K562 (cell line): ENCODE measurements at regions of chrX and their contacts with region 1.

Region 1: DNA sequence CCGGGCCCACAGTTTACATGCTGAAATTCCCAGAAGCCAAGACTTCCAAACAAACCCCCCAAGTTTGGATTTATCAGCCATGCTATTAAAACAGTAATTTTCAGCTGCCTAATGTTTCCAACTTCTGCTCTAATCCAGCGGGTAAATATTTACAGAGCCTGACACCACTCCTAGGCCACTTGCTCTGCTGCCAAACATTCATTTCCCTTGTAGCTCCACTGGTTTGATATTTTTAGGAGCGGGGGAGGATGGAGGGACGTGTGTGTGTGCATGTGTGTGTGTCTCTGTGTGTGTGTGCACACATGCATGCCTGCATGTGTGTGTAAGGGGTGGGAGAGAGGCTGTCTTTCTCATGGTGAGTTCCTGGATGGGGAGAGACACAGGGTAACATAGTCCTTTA is 115.7 kb upstream of the PJA1 start:
- DNase-seq: no peak
- ATAC-seq: no peak
- H3K4me3 ChIP-seq: no peak overlapping the region
- H3K27ac ChIP-seq: no peak overlapping the region
- H3K4me1 ChIP-seq: peaks cover 0 to 3% of the 10 kb centered on the region in 2 experiments; a peak in 2 of 5 replicates
- H3K27me3 ChIP-seq: peaks cover 0 to 18% of the 10 kb centered on the region in 2 experiments; a peak in 2 of 5 replicates
- CTCF ChIP-seq: no peak
- EP300 ChIP-seq: no peak
- POLR2A ChIP-seq: no peak
- RAD21 ChIP-seq: no peak

Region 2: GRCh38 chrX:68822641-68823410 is 458.1 kb before region 1 on chrX:
- CTCF ChIA-PET with region 1: interaction called, 3 read pairs
- POLR2A ChIA-PET with region 1: no interaction called
- in situ Hi-C with region 1: loop called (anchors 5 kb)
- intact Hi-C with region 1: loop called (anchors 2 kb)
- DNase-seq: peak; percentile 32 to 46 (median 41)
- ATAC-seq: peak; percentile 96
- H3K4me3 ChIP-seq: no peak overlapping the region
- H3K27ac ChIP-seq: no peak overlapping the region
- H3K4me1 ChIP-seq: no peaks in the 10 kb centered on the region; a peak in 1 of 5 replicates
- H3K27me3 ChIP-seq: no peaks in the 10 kb centered on the region
- CTCF ChIP-seq: peak; percentile 59 to 73 (median 60)
- EP300 ChIP-seq: no peak
- POLR2A ChIP-seq: no peak
- RAD21 ChIP-seq: peak; percentile 59 to 74; a peak in 3 of 4 replicates